Lower leg skin (tissue), 4 donors: ENCODE measurements at regions of chr20 and their contacts with region 1.

Region 1: DNA sequence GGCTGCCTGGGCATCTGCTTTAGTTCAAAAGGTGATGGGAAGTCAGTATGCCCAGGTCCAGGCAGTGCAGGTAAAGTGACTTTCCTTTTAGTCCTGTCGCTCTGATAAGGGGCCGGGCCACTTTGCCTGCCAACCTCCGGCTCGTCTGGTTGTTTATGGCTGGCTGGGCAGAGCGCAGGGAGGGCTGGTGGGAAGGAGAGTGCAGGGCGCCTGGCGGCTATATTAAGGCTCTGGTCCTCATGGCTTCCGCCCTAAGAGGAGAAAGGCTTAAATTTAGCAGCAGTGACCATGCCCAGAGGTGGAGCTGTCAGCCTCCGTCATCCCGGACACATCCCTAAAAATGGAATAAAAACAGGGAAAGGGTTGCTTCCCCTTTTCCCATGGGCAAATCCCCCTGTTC is 14.6 kb downstream of the GATA5 start:
- DNase-seq: no peak
- H3K4me3 ChIP-seq: no peak overlapping the region
- CTCF ChIP-seq: no peak
- POLR2A ChIP-seq: no peak

Region 2: GRCh38 chr20:62182613-62183425 is 278.3 kb before region 1 on chr20 and contains the start of gene MTG2:
- intact Hi-C with region 1: loop called (anchors 5 kb)
- DNase-seq: peak; percentile 91 to 98
- H3K4me3 ChIP-seq: peak within 1 kb of the TSS; percentile 98
- CTCF ChIP-seq: no peak
- POLR2A ChIP-seq: no peak
- total RNA-seq, gene MTG2: 21.4 to 42.0 (median 29.1) TPM

Region 3: GRCh38 chr20:62616728-62617621 is 155.8 kb after region 1 on chr20:
- intact Hi-C with region 1: no loop called
- DNase-seq: peak in 1 of 2 donors; percentile 94
- H3K4me3 ChIP-seq: no peak overlapping the region
- CTCF ChIP-seq: peak in 1 of 3 donors; percentile 60
- POLR2A ChIP-seq: no peak

Region 4: DNA sequence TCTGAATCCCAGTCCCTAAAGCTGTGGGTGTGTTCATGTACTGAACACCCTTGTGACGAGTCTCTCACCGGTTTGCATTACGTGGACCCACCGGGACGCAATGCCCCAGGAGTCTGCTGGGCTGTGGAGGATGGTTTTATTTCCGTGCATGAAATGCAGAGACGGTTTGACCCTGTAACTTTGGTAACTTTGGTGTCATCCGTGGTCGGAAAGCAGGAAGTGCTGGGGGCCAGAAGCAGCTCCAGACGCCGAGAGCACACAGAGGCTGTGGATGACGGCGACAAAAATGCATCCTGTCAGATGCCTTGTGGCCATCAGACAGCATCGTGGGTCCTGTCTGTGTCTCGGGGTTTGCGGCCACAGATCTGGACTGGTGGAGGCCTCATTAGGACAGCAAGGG is 538.4 kb after region 1 on chr20:
- intact Hi-C with region 1: loop called (anchors 10 kb)
- DNase-seq: no peak
- H3K4me3 ChIP-seq: no peak overlapping the region
- CTCF ChIP-seq: no peak
- POLR2A ChIP-seq: no peak